GM12878 (cell line): ENCODE measurements at regions of chr5 and their contacts with region 1.

Region 1: GRCh38 chr5:69166686-69167492 is at the start of gene CCNB1:
- DNase-seq: peak; percentile 95
- ATAC-seq: peak; percentile 99
- H3K4me3 ChIP-seq: peak within 1 kb of the TSS; percentile 86
- H3K27ac ChIP-seq: peak within 1 kb of the TSS; percentile 65
- H3K4me1 ChIP-seq: no peaks in the 10 kb centered on the region
- H3K27me3 ChIP-seq: no peaks in the 10 kb centered on the region
- CTCF ChIP-seq: 0 out of 6 replicates have a peak, but pooled peaks of 1 of the 3 experiments have one; percentile 3
- EP300 ChIP-seq: no peak
- POLR2A ChIP-seq: peak; percentile 90
- RAD21 ChIP-seq: no peak
- polyA plus RNA-seq, gene CCNB1: 312 to 375 TPM

Region 2: DNA sequence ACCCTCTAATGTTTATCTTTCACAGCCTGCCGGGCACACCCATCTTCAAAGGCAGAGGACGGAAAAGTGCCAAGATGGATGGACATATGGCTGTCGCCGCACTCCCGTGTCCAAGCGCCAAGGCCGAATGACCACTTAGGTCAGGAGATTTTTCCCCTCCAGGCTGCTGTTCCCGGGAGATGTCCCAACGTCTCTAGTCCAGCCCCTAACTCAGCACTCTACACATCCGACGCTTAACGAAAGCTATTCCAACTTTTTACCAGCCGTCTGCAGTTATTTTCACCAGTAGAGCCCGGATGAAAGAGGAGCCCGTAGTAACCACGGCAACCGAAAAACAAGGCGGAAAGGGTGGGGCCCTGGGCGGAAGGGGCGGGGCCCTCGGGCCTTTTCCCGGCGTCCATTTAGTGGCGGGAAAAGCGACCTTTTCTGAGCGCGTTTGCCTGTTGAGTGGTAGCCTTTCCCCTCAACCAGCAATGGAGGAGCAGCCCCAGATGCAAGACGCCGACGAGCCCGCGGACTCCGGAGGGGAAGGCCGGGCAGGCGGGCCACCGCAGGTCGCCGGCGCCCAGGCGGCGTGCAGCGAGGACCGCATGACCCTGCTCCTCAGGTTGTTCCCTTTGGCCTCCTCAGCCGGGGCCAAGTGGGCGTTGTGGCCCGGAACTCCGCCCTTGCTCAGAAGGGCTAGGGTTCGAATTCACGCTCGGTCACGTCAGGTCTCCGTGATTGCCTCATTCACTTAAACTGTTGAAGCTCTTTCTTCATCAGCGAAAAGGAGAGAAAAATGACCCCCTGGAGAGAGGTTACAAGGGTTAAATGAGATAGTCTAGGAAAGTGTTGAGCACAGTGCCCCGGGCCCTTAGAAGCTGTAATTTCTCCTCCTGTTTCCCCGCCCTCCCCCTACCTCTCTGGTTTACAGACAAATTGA is 22.5 kb after region 1 on chr5 and contains the start of gene CENPH:
- CTCF ChIA-PET with region 1: interaction called, 4 read pairs
- POLR2A ChIA-PET with region 1: interaction called, 6 read pairs
- RAD21 ChIA-PET with region 1: interaction called, 4 read pairs
- SMC1A ChIA-PET with region 1: interaction called, 5 read pairs
- in situ Hi-C with region 1: no loop called
- intact Hi-C with region 1: loop called (anchors 2 kb)
- DNase-seq: peak; percentile 63
- ATAC-seq: peak; percentile 95
- H3K4me3 ChIP-seq: peak within 1 kb of the TSS; percentile 93
- H3K27ac ChIP-seq: peak within 1 kb of the TSS; percentile 85
- H3K4me1 ChIP-seq: peaks cover 5% of the 10 kb centered on the region; the same call in 1 of the 2 replicates
- H3K27me3 ChIP-seq: no peaks in the 10 kb centered on the region
- CTCF ChIP-seq: no peak
- EP300 ChIP-seq: no peak
- POLR2A ChIP-seq: peak; percentile 82
- RAD21 ChIP-seq: no peak; the same call in 1 of the 2 replicates
- polyA plus RNA-seq, gene CENPH: 7.3 to 18.0 TPM

Region 3: GRCh38 chr5:69242225-69242961 is 75.5 kb after region 1 on chr5:
- CTCF ChIA-PET with region 1: no interaction called
- POLR2A ChIA-PET with region 1: no interaction called
- RAD21 ChIA-PET with region 1: no interaction called
- SMC1A ChIA-PET with region 1: no interaction called
- in situ Hi-C with region 1: no loop called
- intact Hi-C with region 1: no loop called
- DNase-seq: no peak
- ATAC-seq: no peak
- H3K4me3 ChIP-seq: no peak overlapping the region
- H3K27ac ChIP-seq: no peak overlapping the region
- H3K4me1 ChIP-seq: no peaks in the 10 kb centered on the region; the same call in 1 of the 2 replicates
- H3K27me3 ChIP-seq: no peaks in the 10 kb centered on the region
- CTCF ChIP-seq: no peak
- EP300 ChIP-seq: no peak
- POLR2A ChIP-seq: no peak
- RAD21 ChIP-seq: no peak